ENCODE measurements at regions of chr3 and their contacts with region 1.

Region 1: DNA sequence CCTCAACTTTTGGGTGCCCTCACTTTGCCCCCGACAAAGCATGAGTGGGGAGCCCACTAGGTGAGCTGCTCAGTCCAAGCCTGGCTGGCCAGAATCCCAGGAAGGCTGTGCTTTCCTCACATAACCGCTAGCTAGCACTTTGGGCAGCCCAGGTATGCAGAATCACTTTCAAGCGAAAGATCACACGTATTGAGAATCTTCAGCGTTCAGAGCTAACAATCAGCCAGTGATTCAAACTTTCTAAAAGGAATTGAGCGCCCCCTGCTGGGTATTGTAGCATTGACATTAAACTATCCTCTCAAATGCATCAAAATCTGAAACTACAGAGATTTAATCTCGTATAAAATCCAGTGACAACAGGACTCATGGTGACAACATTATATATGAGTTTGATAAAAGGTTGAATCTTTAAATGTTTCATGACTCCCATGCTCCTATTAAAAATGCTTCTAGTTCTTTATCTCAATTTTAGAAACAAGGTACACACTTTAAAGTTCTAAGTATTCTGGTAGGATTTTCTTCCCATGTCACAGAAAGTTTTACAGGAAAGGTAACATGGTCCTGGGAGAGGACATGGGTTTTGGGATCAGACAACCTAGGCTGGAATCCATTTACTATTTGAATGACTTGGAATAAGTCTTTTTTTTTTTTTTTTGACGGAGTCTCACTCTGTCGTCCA is 11.8 kb downstream of the ANAPC13 start:
- DNase-seq: no peak
- H3K4me3 ChIP-seq: no peak overlapping the region
- H3K27ac ChIP-seq: no peak overlapping the region
- H3K4me1 ChIP-seq: peaks cover 45% of the 10 kb centered on the region
- H3K27me3 ChIP-seq: no peaks in the 10 kb centered on the region
- CTCF ChIP-seq: peak; percentile 85

Region 2: DNA sequence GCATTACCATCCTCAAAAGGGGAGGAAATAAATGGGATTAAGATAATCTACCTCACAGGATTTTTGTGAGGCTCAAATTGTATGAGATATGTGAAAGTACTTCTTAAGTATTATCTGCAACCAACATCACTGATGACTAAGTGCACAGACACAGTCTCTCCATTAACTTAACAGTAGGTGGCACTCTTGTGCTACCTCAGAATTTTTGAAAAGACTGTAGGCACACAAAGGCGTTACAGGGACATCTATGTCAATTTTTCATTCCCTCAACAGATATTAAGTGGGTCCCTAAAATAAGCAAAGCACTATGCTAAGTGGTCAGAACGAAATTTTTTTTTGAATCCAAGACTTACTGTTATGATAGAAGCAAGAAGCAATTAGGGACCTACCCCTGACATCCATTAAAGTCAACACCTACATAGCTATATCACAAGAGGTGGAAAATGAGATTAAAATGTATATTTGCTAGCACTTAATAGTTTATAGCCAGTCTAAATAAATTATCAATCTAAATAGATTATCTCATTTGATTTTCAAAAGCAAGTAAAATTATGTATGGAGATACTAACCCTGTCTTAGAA is 276.2 kb before region 1 on chr3:
- intact Hi-C with region 1: loop called (anchors 10 kb)
- DNase-seq: no peak
- H3K4me3 ChIP-seq: no peak overlapping the region
- H3K27ac ChIP-seq: no peak overlapping the region
- H3K4me1 ChIP-seq: peaks cover 3% of the 10 kb centered on the region
- H3K27me3 ChIP-seq: no peaks in the 10 kb centered on the region
- CTCF ChIP-seq: peak; percentile 82

Region 3: DNA sequence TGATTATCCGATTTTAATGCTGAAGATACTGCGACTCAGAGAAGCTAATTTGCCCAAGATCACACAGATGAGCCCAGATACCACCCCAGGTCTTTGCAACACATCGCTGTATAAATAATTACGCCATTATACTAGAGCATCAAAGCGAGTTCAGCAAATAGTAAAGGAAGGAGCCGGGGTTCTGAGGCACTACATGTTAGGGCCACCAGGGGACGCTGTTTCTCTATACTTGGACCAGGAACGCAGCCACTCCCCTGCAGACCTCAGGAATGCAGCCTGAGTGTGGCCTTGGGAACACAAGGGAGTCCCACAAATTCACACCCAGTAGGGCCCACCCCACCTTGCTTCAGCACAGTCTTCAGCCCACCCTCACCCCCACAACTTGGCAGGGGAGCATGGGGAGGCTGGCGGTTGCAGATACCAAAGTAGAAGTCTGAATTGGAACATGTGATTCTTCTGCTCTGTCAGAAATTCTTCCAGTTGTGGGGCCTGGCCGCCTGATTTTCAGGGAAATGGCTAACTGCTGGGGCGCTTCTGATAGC is 165.6 kb before region 1 on chr3:
- intact Hi-C with region 1: loop called (anchors 5 kb)
- DNase-seq: peak; percentile 80
- H3K4me3 ChIP-seq: peak overlapping the region; percentile 29
- H3K27ac ChIP-seq: peak overlapping the region; percentile 85
- H3K4me1 ChIP-seq: peaks cover 44% of the 10 kb centered on the region
- H3K27me3 ChIP-seq: no peaks in the 10 kb centered on the region
- CTCF ChIP-seq: peak; percentile 99

Region 4: DNA sequence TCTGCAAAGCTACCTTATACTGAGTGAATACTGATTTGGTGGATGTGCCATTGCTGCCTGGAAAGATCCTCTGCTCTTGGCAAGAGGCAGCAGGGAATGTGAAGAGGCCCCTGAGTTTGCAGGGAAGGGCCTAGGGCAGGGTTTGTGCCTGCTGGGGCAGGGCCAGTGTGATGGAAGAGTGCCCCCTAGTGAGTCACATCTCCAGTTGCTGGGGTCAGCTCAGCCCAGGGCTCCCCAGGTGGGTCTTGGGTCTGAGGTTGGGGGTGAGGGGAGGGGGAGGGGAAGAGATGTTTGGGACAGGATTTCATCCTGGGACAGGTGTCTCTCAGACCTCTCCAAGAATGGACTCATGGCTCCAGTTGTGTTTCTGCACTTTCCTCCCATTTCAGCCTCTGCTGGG is 95.6 kb before region 1 on chr3:
- intact Hi-C with region 1: loop called (anchors 5 kb)
- DNase-seq: no peak
- H3K4me3 ChIP-seq: no peak overlapping the region
- H3K27ac ChIP-seq: peak overlapping the region; percentile 62
- H3K4me1 ChIP-seq: peaks cover 40% of the 10 kb centered on the region
- H3K27me3 ChIP-seq: no peaks in the 10 kb centered on the region
- CTCF ChIP-seq: peak; percentile 76

Region 5: GRCh38 chr3:134754768-134755559 is 281.0 kb after region 1 on chr3:
- intact Hi-C with region 1: no loop called
- DNase-seq: peak; percentile 31
- H3K4me3 ChIP-seq: no peak overlapping the region
- H3K27ac ChIP-seq: no peak overlapping the region
- H3K4me1 ChIP-seq: peaks cover 20% of the 10 kb centered on the region
- H3K27me3 ChIP-seq: peaks cover 9% of the 10 kb centered on the region
- CTCF ChIP-seq: peak; percentile 68